Head of caudate nucleus (tissue), 42 donors: ENCODE measurements at regions of chr3 and their contacts with region 1.

Region 1: DNA sequence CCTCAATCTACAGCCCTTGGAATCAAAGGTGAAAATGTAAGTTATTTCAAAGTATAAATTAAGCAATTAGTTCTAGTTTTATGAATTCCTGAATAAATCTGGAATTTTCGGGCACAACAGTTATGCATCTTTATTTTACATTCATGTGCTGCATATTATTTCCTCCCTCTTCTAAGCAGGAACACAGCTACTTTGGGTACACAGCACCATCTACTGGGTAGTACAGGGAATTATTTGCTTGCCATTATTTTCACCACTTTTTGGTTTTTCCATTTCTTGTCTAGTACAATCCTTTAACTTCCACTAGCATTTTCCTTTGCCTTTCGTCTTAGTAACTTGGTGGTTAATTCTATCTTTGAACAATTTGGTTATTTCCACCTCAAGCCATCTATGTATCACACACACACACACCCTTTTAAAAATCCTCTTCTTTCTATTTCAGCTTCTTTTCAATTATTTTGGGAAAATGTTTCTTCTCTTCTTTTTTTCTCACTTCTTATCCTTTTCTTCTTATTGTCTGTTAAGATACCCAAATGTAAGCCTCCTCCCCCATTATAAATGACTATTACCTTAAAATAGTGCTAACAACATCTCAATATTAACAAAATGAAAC is 451.0 kb downstream of the MFSD1 start:
- DNase-seq: no peak

Region 2: GRCh38 chr3:158920371-158920770 is 332.5 kb before region 1 on chr3:
- intact Hi-C with region 1: loop called (anchors 10 kb)
- DNase-seq: no peak

Region 3: DNA sequence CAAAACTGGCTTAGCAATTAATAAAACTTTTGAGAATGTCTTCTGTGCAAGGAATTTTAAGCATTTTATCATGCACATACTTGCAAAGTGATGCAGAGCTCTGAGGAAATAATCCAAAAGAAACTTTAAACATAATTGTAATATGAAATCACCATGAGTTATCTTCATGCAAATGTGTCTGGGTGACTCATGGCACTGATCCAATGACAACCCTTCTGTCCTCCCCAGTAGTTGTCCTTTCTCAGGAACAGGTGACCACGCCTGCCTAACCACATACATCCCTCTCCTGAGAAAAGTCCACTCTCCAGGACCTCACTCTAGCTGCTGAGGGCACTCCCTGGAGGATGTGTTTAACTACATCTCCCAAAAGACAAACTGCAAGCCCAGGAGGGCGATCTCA is 205.1 kb after region 1 on chr3:
- intact Hi-C with region 1: no loop called
- DNase-seq: no peak